ENCODE measurements at regions of chr20 and their contacts with region 1.

Region 1: GRCh38 chr20:462199-462991 is at the start of gene TBC1D20:
- DNase-seq: peak; percentile 92
- ATAC-seq: peak; percentile 97
- H3K4me3 Mint-ChIP-seq: peak within 1 kb of the TSS; percentile 95
- H3K27ac Mint-ChIP-seq: peak within 1 kb of the TSS; percentile 94
- H3K4me1 Mint-ChIP-seq: peaks cover 42% of the 10 kb centered on the region
- H3K27me3 Mint-ChIP-seq: no peaks in the 10 kb centered on the region
- total RNA-seq, gene TBC1D20: 20.9 to 25.2 TPM

Region 2: DNA sequence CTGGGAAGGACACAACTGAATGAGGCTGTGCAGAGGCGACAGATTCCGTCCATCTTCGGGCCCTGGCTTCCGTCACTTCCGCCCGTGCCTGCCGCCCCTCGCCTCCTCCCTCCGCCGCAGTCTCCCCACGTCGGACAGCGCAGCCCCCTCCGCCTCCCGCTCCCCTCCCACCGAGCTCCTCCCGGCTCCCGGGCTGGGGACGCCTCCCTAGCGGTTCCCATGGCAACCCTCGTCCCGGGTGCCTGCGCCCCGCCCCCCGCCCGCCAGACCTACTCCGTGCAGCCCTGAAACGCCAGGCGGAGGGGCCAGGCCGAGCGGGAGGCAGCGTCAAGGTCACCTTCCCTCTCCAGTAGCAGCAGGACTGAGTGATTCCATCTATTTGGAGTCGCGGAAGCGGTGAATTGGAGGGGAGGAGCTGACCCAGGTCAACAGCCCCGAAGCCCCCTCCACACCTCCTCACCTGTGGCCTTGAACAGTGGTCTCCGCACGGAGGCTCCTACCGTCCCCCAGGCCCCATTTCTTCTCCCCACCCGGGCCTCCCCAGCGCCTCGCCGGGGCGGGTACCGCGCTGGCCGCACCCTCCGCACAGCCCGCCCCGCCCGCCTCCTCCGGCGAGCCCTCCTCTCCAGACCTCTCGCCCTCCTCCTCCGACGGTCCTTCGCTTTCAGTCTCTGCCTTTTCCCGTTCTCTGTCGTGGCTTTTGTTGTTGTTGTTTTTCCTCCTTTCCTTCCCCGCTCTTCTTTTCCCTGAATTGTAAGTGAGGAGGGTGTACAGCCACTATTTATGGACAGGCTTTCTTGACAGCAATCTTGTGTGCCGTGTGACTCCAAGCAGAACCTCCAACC is 114.5 kb before region 1 on chr20:
- CTCF ChIA-PET with region 1: interaction called, 3 read pairs
- POLR2A ChIA-PET with region 1: no interaction called
- intact Hi-C with region 1: loop called in 1 of 2 experiments (anchors 1 kb)
- DNase-seq: peak; percentile 78
- ATAC-seq: peak; percentile 76
- H3K4me3 Mint-ChIP-seq: peak overlapping the region; percentile 82
- H3K27ac Mint-ChIP-seq: peak overlapping the region; percentile 42
- H3K4me1 Mint-ChIP-seq: peaks cover 10% of the 10 kb centered on the region
- H3K27me3 Mint-ChIP-seq: no peaks in the 10 kb centered on the region

Region 3: DNA sequence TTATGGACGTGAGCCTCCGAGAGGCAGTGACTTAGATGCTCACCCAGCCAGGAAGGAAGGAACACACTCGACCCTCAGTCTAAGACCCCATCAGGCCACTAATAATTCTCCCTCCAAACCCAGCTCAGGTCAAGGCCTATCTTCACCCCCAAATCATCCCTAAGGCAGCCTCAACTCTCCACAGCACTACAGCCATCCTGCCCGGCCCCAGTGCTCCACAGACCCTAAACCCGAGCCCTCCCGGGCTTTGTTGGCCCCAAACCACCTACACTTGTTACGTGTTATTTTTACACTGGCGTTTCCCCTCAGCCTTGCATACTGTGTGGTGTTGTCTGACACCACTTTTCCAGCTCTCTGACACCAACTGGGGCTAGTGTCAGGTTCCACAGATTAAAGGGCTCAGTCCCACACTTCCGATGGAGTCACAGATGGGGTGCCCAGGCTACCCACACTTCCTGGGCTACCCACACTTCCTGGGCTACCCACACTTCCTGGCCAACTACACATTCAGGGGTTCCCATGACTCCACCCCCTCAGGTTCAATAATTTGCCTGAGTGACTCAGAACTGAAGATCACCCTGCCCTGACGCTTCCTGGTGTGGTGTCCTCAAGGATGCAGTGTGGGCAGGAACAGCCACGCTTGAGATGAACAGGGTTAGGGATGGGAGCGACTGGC is 29.0 kb before region 1 on chr20:
- CTCF ChIA-PET with region 1: interaction called, 5 read pairs
- POLR2A ChIA-PET with region 1: no interaction called
- intact Hi-C with region 1: loop called (anchors 1 kb)
- DNase-seq: peak; percentile 86
- ATAC-seq: peak; percentile 86
- H3K4me3 Mint-ChIP-seq: peak overlapping the region; percentile 51
- H3K27ac Mint-ChIP-seq: peak overlapping the region; percentile 94
- H3K4me1 Mint-ChIP-seq: peaks cover 67% of the 10 kb centered on the region
- H3K27me3 Mint-ChIP-seq: no peaks in the 10 kb centered on the region

Region 4: DNA sequence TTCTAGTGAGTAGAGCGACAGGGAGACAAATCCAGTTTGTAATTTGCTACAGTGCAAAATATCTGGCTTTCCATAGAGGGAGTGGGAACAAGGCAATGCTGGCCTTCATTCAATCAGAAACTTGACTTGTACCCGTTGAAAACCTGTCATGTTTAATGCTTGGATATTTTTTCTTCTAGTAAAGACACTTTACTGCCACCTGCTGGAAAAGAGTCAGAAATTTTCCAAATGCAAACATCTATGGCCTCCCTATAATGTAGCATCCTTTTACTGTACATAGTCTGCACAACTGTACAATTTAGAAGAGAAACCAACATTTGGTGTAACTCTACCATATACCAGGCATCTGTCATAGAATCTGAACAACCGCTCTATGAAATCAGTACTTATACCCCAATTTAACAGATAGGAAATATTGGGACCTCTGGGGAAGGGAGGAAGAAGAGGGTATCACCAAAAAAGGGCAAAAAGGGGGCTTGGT is 16.6 kb after region 1 on chr20:
- CTCF ChIA-PET with region 1: interaction called, 6 read pairs
- POLR2A ChIA-PET with region 1: no interaction called
- intact Hi-C with region 1: loop called in 1 of 2 experiments (anchors 2 kb)
- DNase-seq: peak; percentile 19
- ATAC-seq: peak; percentile 82
- H3K4me3 Mint-ChIP-seq: no peak overlapping the region
- H3K27ac Mint-ChIP-seq: peak overlapping the region; percentile 30
- H3K4me1 Mint-ChIP-seq: peaks cover 28% of the 10 kb centered on the region
- H3K27me3 Mint-ChIP-seq: no peaks in the 10 kb centered on the region

Region 5: DNA sequence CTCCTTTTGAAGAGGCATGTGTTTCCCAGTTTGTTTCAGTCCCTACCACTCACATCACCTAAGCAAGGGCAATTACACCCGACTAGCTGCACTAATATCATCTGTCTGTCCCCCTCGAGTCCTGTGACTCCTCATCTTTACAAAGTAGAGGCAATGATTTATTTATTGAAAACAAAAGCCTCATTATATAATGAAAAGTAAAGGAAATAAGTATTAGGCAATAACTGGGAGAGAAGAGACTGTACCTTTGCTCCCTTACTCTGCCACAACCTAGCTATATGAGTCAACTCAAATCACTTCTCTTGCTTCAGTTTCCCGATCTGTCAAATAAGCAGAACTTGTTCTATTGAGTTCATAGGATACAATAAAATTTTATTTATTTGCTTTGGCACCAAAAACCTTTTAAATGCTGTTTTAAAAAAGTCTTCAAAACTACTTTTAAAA is 42.3 kb after region 1 on chr20:
- CTCF ChIA-PET with region 1: no interaction called
- POLR2A ChIA-PET with region 1: no interaction called
- intact Hi-C with region 1: no loop called
- DNase-seq: no peak
- ATAC-seq: no peak
- H3K4me3 Mint-ChIP-seq: no peak overlapping the region
- H3K27ac Mint-ChIP-seq: no peak overlapping the region
- H3K4me1 Mint-ChIP-seq: peaks cover 9% of the 10 kb centered on the region
- H3K27me3 Mint-ChIP-seq: no peaks in the 10 kb centered on the region

Region 6: DNA sequence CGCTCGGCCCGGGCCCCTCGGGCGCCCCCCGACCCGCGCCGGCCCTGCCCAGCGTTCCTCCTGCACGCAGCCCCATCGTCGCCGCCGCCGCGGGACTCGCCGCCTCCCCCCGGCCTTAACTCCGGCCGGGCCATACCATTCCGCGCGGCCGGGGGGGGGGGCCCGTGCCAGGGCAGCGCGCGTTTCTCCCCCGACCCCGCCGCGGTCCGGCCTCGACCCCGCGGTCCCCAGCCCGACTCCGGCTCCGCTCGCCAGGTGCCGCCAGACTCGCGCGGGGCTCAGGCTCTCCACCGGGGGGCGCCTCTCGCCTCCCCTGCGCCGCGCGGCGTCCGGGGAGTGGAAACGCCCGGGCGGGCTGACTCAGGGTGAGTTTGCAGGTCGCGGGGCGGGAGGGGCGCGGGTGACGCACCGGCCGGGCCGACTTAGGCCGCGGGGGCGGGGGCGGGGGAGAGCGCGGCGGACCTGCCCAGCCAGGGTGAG is 190.8 kb after region 1 on chr20 and contains the start of gene SRXN1:
- CTCF ChIA-PET with region 1: no interaction called
- POLR2A ChIA-PET with region 1: no interaction called
- intact Hi-C with region 1: loop called in 1 of 2 experiments (anchors 1 kb)
- DNase-seq: peak; percentile 91
- ATAC-seq: peak; percentile 93
- H3K4me3 Mint-ChIP-seq: peak within 1 kb of the TSS; percentile 76
- H3K27ac Mint-ChIP-seq: peak within 1 kb of the TSS; percentile 80
- H3K4me1 Mint-ChIP-seq: peaks cover 24% of the 10 kb centered on the region
- H3K27me3 Mint-ChIP-seq: peaks cover 8% of the 10 kb centered on the region
- total RNA-seq, gene SRXN1: 12.6 to 13.5 TPM